Colonic mucosa (tissue), 4 donors: ENCODE measurements at regions of chr5 and their contacts with region 1.

Region 1: DNA sequence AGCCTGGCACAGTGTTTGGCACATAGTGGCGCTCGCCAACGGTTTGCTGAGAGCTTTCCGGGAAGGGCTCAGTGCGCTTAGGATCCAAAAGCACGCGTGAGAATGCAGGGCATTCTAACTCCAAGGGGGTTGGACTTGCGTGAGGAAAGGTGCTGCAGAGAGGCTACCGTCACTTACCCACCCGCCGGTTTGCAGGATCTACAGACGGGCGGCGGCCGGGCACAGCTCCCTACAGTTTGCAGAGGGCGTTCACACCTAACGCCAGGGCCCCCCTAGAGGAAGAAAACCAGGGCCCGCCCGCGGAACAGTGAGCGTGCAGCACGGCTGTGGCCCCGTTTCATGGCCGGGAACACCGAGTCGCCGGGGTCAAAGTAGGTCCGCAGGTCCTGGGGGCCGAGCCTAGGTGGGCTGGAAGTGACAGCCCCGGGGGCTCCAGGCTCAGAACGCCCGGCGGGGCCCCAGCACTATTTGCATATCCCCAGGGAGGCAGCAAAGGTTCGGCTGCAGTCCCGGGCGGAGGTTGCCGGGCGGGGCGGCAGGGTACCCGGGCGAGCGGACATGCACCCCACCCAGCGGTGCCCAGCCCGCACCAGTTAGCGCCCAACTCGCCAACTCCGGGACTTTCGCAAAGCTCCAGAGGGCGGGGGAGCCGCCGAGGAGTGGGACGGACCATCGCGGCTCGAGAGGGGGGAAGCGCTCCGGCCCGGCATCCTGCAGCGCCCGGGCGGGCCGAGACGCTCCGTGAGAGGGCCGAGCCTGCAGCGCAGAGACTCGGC is 526 bp upstream of the GALNT10 start:
- DNase-seq: peak; percentile 89
- H3K4me3 ChIP-seq: peak overlapping the region; percentile 85
- H3K27ac ChIP-seq: peak overlapping the region; percentile 92
- H3K4me1 ChIP-seq: peaks cover 3% of the 10 kb centered on the region
- H3K27me3 ChIP-seq: no peaks in the 10 kb centered on the region
- CTCF ChIP-seq: peak; percentile 23

Region 2: DNA sequence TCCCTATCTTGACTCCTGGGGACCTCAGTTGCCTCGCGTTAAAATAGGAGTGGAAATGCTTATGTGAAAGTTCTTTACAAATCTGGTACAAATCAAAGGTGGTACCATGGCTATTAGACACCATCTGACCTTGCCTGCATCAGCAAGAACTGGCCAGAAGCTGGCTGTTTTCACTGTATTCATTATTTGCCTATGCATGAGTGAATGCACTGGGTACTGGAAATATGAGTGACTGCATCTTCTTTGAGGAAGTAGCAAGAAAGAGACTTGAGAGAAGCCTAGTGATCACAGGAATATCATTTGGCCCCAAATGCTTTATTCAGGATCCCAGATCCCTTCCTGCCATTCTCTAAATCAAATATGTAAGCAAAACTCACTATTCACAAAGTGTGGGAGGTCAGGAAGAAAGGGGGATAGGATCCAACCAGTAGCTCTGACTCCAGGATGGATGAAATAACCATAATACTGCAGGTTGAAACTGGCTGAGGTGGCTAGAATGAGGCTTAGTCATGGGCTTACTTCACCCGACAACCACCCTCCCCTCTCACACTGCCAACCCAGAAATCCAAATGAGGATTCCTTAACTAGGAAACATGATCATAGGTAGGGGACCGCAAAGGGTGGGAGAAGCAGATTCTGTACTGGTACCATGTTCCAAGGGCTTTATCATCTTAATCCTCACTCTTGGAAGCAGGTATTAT is 208.0 kb before region 1 on chr5:
- intact Hi-C with region 1: no loop called
- DNase-seq: no peak
- H3K4me3 ChIP-seq: no peak overlapping the region
- H3K27ac ChIP-seq: no peak overlapping the region
- H3K4me1 ChIP-seq: no peaks in the 10 kb centered on the region
- H3K27me3 ChIP-seq: no peaks in the 10 kb centered on the region
- CTCF ChIP-seq: no peak

Region 3: DNA sequence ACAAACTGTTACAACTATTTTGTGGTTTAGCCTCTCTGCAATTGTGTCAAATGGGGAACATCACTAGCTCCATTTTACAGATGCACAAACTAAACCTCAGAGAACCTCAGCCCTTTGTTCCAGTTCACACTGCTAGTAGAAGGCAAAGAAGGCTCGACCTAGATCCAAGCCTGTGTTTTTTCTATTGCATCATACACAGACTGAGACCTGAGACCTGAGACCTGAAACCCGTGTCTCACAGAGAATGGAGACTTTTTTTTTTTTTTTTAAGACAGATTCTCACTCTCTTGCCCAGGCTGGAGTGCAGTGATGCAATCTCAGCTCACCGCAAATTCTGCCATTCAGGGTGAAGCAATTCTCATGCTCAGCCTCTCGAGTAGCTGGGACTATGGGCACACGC is 121.4 kb after region 1 on chr5:
- intact Hi-C with region 1: loop called (anchors 10 kb)
- DNase-seq: no peak
- H3K4me3 ChIP-seq: no peak overlapping the region
- H3K27ac ChIP-seq: no peak overlapping the region
- H3K4me1 ChIP-seq: no peaks in the 10 kb centered on the region
- H3K27me3 ChIP-seq: no peaks in the 10 kb centered on the region
- CTCF ChIP-seq: no peak

Region 4: GRCh38 chr5:154395407-154396258 is 205.6 kb after region 1 on chr5:
- intact Hi-C with region 1: loop called (anchors 5 kb)
- DNase-seq: peak; percentile 39
- H3K4me3 ChIP-seq: no peak overlapping the region
- H3K27ac ChIP-seq: no peak overlapping the region
- H3K4me1 ChIP-seq: peaks cover 6% of the 10 kb centered on the region
- H3K27me3 ChIP-seq: no peaks in the 10 kb centered on the region
- CTCF ChIP-seq: no peak

Region 5: DNA sequence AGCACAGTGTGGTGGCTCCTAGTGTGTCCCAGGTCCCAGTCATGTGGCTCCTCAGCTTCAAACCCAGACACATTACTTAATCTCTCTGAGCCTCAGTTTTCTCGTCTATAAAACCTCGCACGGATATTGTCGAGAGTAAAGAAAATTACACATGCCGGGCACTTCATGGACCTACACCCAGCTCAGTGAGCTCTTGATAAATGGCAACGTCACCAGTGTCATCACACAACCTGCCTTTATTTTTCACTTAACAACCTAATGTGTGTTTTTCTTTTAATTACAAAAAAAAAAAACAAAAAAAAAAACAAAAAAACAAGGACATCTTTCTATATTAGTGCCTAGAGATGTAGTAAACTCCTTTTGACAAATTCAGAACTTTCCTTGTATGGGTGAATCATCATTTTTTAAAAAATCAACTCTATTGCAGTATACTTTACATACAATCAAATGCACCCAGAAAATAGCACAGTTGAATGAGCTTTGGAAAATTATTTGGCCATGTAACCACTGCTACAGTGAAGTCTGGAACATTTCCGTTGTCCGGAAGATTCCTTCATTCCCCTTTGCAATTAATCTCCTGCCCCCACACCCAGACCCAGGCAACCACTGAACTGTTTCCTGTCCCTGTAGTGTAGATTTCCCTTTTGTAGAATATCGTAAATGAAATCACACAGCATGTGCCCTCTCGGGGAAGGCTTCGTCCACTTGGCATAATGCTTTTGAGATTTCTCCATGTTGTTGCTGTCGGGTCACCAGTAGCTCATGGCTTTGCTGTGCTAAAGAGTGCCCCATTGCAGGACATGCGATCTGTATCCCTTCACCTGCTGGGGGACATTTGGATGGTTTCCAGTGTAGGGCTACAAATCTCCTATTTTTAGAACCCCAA is 464.7 kb after region 1 on chr5:
- intact Hi-C with region 1: no loop called
- DNase-seq: no peak
- H3K4me3 ChIP-seq: no peak overlapping the region
- H3K27ac ChIP-seq: no peak overlapping the region
- H3K4me1 ChIP-seq: peaks cover 9% of the 10 kb centered on the region
- H3K27me3 ChIP-seq: no peaks in the 10 kb centered on the region
- CTCF ChIP-seq: no peak